ENCODE measurements at regions of chr18 and their contacts with region 1.

Region 1: GRCh38 chr18:4455113-4455811 is at the start of gene DLGAP1:
- DNase-seq: peak; percentile 63
- H3K4me3 ChIP-seq: peak within 1 kb of the TSS in 3 of 4 donors; percentile 38 to 51 (median 45)
- H3K27ac ChIP-seq: no peak within 1 kb of the TSS
- H3K4me1 ChIP-seq: peaks cover 0 to 19% (median 16%) of the 10 kb centered on the region in 4 donors
- H3K27me3 ChIP-seq: peaks cover 9 to 56% (median 19%) of the 10 kb centered on the region in 3 donors
- CTCF ChIP-seq: no peak
- EP300 ChIP-seq: no peak
- POLR2A ChIP-seq: no peak
- total RNA-seq, gene DLGAP1: 1.1 to 2.6 (median 1.8) TPM

Region 2: GRCh38 chr18:4335386-4335785 is 119.9 kb before region 1 on chr18:
- intact Hi-C with region 1: no loop called
- DNase-seq: no peak
- H3K4me3 ChIP-seq: no peak overlapping the region
- H3K27ac ChIP-seq: no peak overlapping the region
- H3K4me1 ChIP-seq: peaks cover 0 to 12% (median 0%) of the 10 kb centered on the region in 4 donors
- H3K27me3 ChIP-seq: peaks cover 0 to 3% (median 0%) of the 10 kb centered on the region in 3 donors
- CTCF ChIP-seq: no peak
- EP300 ChIP-seq: no peak
- POLR2A ChIP-seq: no peak

Region 3: GRCh38 chr18:4510711-4511110 is 55.4 kb after region 1 on chr18:
- intact Hi-C with region 1: loop called (anchors 5 kb)
- DNase-seq: no peak
- H3K4me3 ChIP-seq: no peak overlapping the region
- H3K27ac ChIP-seq: no peak overlapping the region
- H3K4me1 ChIP-seq: no peaks in the 10 kb centered on the region
- H3K27me3 ChIP-seq: no peaks in the 10 kb centered on the region
- CTCF ChIP-seq: no peak
- EP300 ChIP-seq: no peak
- POLR2A ChIP-seq: no peak

Measured in sigmoid colon (tissue), 7 donors.